Ascending aorta (tissue), 2 donors: ENCODE measurements at regions of chr1 and their contacts with region 1.

Region 1: GRCh38 chr1:101357444-101357986 is 120.7 kb downstream of the S1PR1 start:
- DNase-seq: peak in 1 of 2 donors; percentile 67
- H3K4me3 ChIP-seq: no peak overlapping the region
- H3K27ac ChIP-seq: no peak overlapping the region
- H3K4me1 ChIP-seq: no peaks in the 10 kb centered on the region
- H3K27me3 ChIP-seq: no peaks in the 10 kb centered on the region
- CTCF ChIP-seq: peak; percentile 18 to 79 (median 77)

Region 2: DNA sequence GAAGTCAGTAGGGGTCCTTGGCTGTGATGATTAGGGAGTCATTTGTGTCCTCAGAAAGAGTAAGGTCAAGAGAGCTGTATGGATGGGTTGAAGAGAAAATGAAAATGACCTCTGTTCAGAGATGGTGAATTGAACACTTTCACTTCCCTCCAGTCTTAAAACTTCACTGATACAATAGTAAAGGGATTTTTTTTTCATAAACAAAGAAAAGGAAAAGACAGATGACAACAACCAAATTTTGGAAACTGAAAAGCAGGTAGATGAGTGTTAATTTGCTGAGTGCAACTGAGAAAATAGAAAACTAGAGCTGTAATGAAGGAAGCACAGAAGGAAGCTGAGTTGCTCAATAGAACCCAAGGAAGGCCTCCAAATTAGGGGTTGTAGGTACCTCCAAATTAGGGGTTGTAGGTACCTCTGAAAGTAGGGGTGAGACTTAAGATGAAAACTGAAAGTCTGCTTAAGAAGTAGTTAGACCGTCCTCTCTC is 135.5 kb before region 1 on chr1:
- intact Hi-C with region 1: no loop called
- DNase-seq: no peak
- H3K4me3 ChIP-seq: no peak overlapping the region
- H3K27ac ChIP-seq: no peak overlapping the region
- H3K4me1 ChIP-seq: peaks cover 0 to 2% of the 10 kb centered on the region in 2 donors
- H3K27me3 ChIP-seq: no peaks in the 10 kb centered on the region
- CTCF ChIP-seq: no peak

Region 3: DNA sequence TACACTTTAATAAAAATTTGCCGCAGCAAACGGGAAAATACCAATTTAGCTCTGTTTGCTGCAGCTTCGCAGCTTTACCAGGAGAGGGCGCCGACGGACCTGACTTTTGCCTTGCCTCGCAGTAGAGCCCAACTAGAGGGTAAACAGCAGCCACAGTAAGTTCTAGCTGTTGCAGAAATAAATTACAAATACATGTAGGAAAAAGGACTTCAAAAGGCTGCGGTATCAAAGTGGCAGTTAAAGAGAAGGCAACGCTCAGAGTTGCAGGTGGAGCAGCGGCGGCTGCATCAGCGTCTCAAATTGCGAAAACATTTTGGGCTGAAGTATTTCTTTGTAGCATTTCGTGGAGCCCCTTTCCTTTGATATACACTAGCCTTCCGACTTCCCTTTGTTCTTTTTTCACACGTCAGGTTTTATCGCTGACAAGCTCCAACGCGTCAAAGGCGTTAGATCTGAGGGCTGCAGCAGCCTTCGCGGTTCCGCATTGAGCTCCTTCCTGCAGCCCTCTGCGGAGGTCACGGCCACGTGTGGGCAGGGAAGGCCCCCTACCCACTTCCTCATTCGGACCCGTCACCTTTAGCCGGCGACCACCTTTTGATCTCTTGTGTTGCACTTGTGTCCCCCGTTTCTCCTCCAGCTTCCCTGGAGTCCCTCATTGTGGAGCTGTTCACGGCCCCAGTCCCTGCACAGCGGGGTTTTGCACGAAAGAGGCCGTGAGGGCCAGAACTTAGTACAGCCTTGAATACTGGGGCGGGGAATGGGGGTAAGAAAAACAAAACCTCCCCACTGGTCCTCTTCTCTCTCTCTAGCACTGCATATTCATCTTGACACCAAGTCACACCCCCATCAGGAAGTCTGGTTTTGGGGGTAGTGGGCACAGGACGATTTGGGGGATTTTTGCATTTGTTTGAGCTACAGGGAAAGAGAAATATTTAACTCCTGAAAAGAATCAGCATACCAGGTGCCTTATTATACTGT is 47.9 kb before region 1 on chr1:
- intact Hi-C with region 1: loop called (anchors 1 kb)
- DNase-seq: peak in 1 of 2 donors; percentile 70
- H3K4me3 ChIP-seq: peak overlapping the region; percentile 41 to 58
- H3K27ac ChIP-seq: no peak overlapping the region
- H3K4me1 ChIP-seq: no peaks in the 10 kb centered on the region
- H3K27me3 ChIP-seq: no peaks in the 10 kb centered on the region
- CTCF ChIP-seq: peak; percentile 55 to 86 (median 86)